Adrenal gland (tissue), 19 donors: ENCODE measurements at regions of chr10 and their contacts with region 1.

Region 1: DNA sequence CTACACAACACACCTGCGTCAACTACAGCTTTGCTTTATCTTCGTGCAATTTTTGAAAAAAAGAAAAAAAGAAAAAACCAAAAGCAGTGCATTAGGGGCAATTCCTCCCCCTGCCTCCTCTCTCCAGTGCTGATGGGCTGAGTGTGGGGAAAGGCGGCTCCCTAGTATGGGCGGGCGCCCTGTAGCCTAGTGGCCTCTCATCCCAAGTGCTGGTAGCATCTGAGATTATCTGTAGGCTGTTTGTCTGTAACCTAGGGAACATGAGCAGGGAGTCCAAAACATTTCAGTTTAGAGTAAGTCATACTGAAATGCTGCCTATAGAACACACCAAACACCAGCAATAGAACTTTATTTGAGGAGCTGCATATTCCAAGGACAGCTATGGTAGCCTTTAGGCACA is 24.6 kb upstream of the BAMBI start:
- DNase-seq: no peak
- H3K4me3 ChIP-seq: no peak overlapping the region
- H3K27ac ChIP-seq: no peak overlapping the region
- H3K4me1 ChIP-seq: no peaks in the 10 kb centered on the region
- H3K27me3 ChIP-seq: peaks cover 5% of the 10 kb centered on the region
- CTCF ChIP-seq: no peak
- POLR2A ChIP-seq: no peak

Region 2: DNA sequence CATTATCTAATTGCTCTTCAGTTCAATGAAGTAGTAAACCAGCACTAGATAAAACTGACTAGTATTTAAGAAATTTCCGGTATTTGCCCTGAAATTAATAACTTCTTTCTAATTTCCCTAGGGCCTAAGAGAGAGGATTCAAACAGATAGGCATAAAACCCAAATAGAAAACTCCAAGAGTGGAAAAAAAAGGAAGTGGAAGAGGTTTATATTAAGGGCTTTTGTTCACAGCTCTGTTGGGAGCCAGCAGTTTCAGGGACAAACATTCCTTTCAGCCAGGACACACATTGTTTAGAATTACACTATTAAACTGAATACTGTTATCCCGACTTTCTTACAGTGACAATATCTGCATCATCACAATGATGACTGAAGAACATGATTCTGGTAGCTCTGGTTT is 657.4 kb before region 1 on chr10:
- intact Hi-C with region 1: no loop called
- DNase-seq: no peak
- H3K4me3 ChIP-seq: no peak overlapping the region
- H3K27ac ChIP-seq: no peak overlapping the region
- H3K4me1 ChIP-seq: peaks cover 0 to 4% of the 10 kb centered on the region in 2 donors
- H3K27me3 ChIP-seq: peaks cover 7% of the 10 kb centered on the region
- CTCF ChIP-seq: no peak
- POLR2A ChIP-seq: no peak

Region 3: DNA sequence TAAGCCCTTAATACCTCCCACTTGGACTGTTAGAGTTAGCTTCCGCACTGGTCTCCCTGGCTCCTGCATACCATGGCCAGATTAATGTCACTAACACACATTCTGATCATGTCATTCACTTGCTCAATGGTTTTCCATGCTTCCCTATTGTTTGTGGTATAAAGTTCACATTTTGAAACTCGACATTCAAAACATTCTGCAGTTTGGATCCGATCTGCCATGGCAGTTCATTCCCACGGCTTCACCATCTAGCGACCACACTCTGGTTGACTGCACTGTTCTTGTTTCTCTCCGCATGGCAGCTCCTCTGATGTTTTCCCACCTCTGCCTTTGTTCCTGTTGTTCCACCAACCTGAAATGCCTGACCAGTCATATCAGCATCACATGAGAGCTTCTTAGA is 207.2 kb before region 1 on chr10:
- intact Hi-C with region 1: no loop called
- DNase-seq: no peak
- H3K4me3 ChIP-seq: no peak overlapping the region
- H3K27ac ChIP-seq: no peak overlapping the region
- H3K4me1 ChIP-seq: no peaks in the 10 kb centered on the region
- H3K27me3 ChIP-seq: no peaks in the 10 kb centered on the region
- CTCF ChIP-seq: no peak
- POLR2A ChIP-seq: no peak

Region 4: GRCh38 chr10:29317027-29317420 is 664.3 kb after region 1 on chr10:
- intact Hi-C with region 1: loop called in 1 of 2 experiments (anchors 5 kb)
- DNase-seq: no peak
- H3K4me3 ChIP-seq: no peak overlapping the region
- H3K27ac ChIP-seq: no peak overlapping the region
- H3K4me1 ChIP-seq: no peaks in the 10 kb centered on the region
- H3K27me3 ChIP-seq: no peaks in the 10 kb centered on the region
- CTCF ChIP-seq: no peak
- POLR2A ChIP-seq: no peak